Activated CD4-positive, alpha-beta T cell treated with anti-CD3 and anti-CD28 coated beads, Interleukin-2, amount 10 ng/mL, durations not matched to agents 24 days and 14 days (primary cell): ENCODE measurements at regions of chr11 and their contacts with region 1.

Region 1: DNA sequence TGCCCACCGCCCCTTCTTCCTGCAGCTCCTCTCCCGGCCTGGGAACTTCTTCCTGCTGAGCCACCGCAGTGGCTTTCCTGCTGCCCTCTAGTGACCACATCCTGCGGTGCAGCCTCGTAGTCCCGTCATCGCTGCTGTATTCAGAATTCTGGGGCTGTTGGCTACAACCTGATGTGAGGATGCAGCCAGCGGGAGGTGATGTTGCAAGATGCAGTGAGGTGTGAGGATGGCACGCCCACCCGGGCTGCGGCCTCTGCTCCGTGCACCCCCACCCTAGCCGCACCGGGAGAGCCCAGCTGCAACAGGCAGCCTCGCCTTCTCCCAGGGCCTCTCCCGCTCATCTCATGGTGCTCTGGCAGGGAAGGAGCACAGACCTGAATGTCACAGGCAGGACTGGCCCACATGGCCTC is 10.1 kb downstream of the CHST1 start:
- DNase-seq: peak; percentile 87
- H3K4me3 Mint-ChIP-seq: no peak overlapping the region
- H3K27ac Mint-ChIP-seq: no peak overlapping the region
- H3K4me1 Mint-ChIP-seq: peaks cover 2% of the 10 kb centered on the region
- H3K27me3 Mint-ChIP-seq: peaks cover 15% of the 10 kb centered on the region

Region 2: DNA sequence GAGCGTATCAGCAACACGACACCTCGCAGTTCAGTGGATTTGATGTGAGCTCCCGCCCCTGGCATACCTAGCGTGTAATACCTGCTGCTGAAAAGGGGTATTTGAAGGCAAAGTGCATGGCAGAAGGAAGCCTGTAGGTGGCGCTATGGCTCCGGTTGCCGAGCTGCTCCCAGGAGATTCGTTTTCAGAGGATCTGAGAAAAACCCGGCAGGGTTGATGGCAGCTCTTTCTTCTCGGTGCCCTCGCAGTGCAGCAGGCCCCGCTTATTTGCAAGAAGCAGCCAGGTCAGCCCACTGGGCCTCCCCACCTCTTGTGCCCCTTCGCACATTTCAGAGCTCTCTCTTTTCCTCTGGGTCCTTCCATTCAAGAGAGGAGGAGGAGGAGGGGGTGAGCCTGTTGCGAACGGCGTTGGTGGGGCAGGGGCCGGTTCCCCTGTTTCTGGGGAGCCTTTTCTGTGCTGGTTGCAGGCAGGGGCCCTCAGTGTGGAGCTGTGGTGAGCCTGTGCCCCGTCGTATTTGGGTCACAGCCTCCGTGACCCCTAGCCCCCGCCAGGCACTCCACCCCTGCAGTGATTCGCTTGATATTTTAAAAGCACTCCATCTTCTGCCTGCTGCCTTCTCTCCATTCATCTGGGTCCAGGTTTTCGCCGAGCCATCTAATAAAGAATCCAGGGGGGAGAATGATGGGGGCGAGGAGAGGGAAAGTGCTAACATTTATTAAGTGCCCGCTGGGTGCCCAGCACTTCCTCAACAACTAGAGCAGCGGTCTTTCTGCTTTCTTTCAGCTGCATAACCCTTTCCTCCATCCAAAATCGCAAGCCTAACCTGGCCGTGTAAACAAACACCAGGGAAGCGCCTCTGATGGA is 283.9 kb before region 1 on chr11:
- intact Hi-C with region 1: loop called (anchors 2 kb)
- DNase-seq: peak; percentile 87
- H3K4me3 Mint-ChIP-seq: no peak overlapping the region
- H3K27ac Mint-ChIP-seq: no peak overlapping the region
- H3K4me1 Mint-ChIP-seq: peaks cover 9% of the 10 kb centered on the region
- H3K27me3 Mint-ChIP-seq: peaks cover 25% of the 10 kb centered on the region

Region 3: GRCh38 chr11:46039990-46040389 is 384.6 kb after region 1 on chr11:
- intact Hi-C with region 1: no loop called
- DNase-seq: no peak
- H3K4me3 Mint-ChIP-seq: no peak overlapping the region
- H3K27ac Mint-ChIP-seq: no peak overlapping the region
- H3K4me1 Mint-ChIP-seq: peaks cover 12% of the 10 kb centered on the region
- H3K27me3 Mint-ChIP-seq: no peaks in the 10 kb centered on the region